Endothelial cell of umbilical vein (primary cell): ENCODE measurements at regions of chr9 and their contacts with region 1.

Region 1: GRCh38 chr9:136118320-136119060 is at the start of gene TMEM250:
- DNase-seq: peak; percentile 98
- H3K4me3 ChIP-seq: peak within 1 kb of the TSS; percentile 67 to 73 (median 70)
- H3K27ac ChIP-seq: peak within 1 kb of the TSS; percentile 41
- H3K4me1 ChIP-seq: peaks cover 12% of the 10 kb centered on the region
- H3K27me3 ChIP-seq: no peaks in the 10 kb centered on the region
- CTCF ChIP-seq: no peak
- POLR2A ChIP-seq: peak; percentile 4
- total RNA-seq, gene TMEM250: 47.4 and 49.9 TPM in 2 replicates

Region 2: DNA sequence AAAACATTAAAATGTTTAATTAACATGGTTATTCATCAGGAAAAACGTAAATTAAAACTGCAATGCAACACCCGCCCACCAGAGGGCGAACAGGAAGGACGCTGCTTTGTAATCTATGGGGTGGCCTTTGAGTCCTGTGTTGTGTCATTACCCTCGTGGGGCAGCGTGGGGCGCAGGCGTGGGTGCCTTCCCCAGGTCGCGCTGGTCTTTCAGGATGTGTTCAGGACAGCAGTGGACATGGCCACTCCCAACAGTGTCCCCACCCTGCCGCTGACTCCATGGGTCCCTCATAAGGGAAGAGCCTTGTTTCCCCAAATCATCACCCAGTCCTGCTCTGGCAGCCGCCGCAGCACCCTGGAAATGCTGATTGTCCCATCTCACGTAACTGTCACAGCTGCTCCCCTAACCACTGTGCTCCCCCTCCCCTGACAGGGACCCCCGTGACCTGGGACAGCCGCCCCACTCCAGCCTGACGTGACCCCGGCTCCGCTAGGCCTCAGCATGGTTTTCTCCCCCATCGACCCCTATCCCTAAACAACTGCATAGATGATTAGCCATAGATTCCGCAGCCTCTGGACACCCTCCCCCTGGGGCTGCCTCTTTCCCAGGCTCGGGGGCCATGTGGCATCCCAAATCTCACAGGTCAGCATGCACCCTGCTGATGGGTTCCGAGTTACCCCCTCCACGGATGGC is 515.6 kb before region 1 on chr9:
- CTCF ChIA-PET with region 1: no interaction called
- POLR2A ChIA-PET with region 1: no interaction called
- dilution Hi-C with region 1: no loop called
- intact Hi-C with region 1: loop called (anchors 1 kb)
- DNase-seq: peak; percentile 46
- H3K4me3 ChIP-seq: no peak overlapping the region
- H3K27ac ChIP-seq: no peak overlapping the region
- H3K4me1 ChIP-seq: no peaks in the 10 kb centered on the region
- H3K27me3 ChIP-seq: peaks cover 6% of the 10 kb centered on the region in 2 experiments
- CTCF ChIP-seq: peak; percentile 71 to 72
- POLR2A ChIP-seq: no peak

Region 3: GRCh38 chr9:135797507-135798262 is 320.8 kb before region 1 on chr9:
- CTCF ChIA-PET with region 1: interaction called, 26 read pairs
- POLR2A ChIA-PET with region 1: no interaction called
- dilution Hi-C with region 1: no loop called
- intact Hi-C with region 1: loop called (anchors 1 kb)
- DNase-seq: peak; percentile 29
- H3K4me3 ChIP-seq: no peak overlapping the region
- H3K27ac ChIP-seq: no peak overlapping the region
- H3K4me1 ChIP-seq: peaks cover 4% of the 10 kb centered on the region
- H3K27me3 ChIP-seq: no peaks in the 10 kb centered on the region
- CTCF ChIP-seq: peak; percentile 88 to 91
- POLR2A ChIP-seq: no peak

Region 4: GRCh38 chr9:135907431-135908092 is 210.9 kb before region 1 on chr9 and contains the start of gene CAMSAP1:
- CTCF ChIA-PET with region 1: interaction called, 4 read pairs
- POLR2A ChIA-PET with region 1: no interaction called
- dilution Hi-C with region 1: no loop called
- intact Hi-C with region 1: loop called (anchors 2 kb)
- DNase-seq: peak; percentile 95
- H3K4me3 ChIP-seq: peak within 1 kb of the TSS; percentile 42 to 84 (median 73)
- H3K27ac ChIP-seq: peak within 1 kb of the TSS; percentile 45
- H3K4me1 ChIP-seq: peaks cover 36% of the 10 kb centered on the region
- H3K27me3 ChIP-seq: no peaks in the 10 kb centered on the region
- CTCF ChIP-seq: no peak
- POLR2A ChIP-seq: peak; percentile 45
- total RNA-seq, gene CAMSAP1: 25.5 and 30.6 TPM in 2 replicates

Region 5: DNA sequence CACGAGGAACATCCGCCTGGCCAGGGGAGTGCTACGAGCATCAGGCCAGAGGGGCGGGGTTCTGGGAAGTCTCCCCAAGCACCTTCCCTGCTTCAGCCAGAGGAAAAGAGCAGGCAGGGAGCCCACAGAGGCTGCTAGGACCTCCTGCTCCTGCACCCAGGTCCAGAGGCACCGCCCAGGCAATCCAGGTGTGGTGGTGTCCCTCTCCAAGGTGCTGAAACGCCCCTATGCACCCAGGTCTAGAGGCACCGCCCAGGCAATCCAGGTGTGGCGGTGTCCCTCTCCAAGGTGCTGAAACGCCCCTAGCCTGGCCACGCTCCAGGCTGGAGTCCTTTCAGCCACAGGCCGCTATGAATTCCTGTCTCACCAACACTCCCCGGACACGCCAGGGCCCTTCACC is 146.6 kb before region 1 on chr9:
- CTCF ChIA-PET with region 1: interaction called, 211 read pairs
- POLR2A ChIA-PET with region 1: no interaction called
- dilution Hi-C with region 1: no loop called
- intact Hi-C with region 1: loop called (anchors 1 kb)
- DNase-seq: no peak
- H3K4me3 ChIP-seq: no peak overlapping the region
- H3K27ac ChIP-seq: no peak overlapping the region
- H3K4me1 ChIP-seq: peaks cover 22% of the 10 kb centered on the region
- H3K27me3 ChIP-seq: no peaks in the 10 kb centered on the region
- CTCF ChIP-seq: no peak
- POLR2A ChIP-seq: no peak

Region 6: GRCh38 chr9:136051517-136052432 is 66.7 kb before region 1 on chr9:
- CTCF ChIA-PET with region 1: interaction called, 18 read pairs
- POLR2A ChIA-PET with region 1: no interaction called
- dilution Hi-C with region 1: no loop called
- intact Hi-C with region 1: loop called (anchors 1 kb)
- DNase-seq: peak; percentile 96
- H3K4me3 ChIP-seq: peak overlapping the region; percentile 49 to 66 (median 53)
- H3K27ac ChIP-seq: peak overlapping the region; percentile 66
- H3K4me1 ChIP-seq: peaks cover 33% of the 10 kb centered on the region
- H3K27me3 ChIP-seq: no peaks in the 10 kb centered on the region
- CTCF ChIP-seq: no peak
- POLR2A ChIP-seq: peak; percentile 47

Region 7: GRCh38 chr9:136170006-136170901 is 51.8 kb after region 1 on chr9:
- CTCF ChIA-PET with region 1: no interaction called
- POLR2A ChIA-PET with region 1: no interaction called
- dilution Hi-C with region 1: no loop called
- intact Hi-C with region 1: no loop called
- DNase-seq: no peak
- H3K4me3 ChIP-seq: no peak overlapping the region
- H3K27ac ChIP-seq: no peak overlapping the region
- H3K4me1 ChIP-seq: no peaks in the 10 kb centered on the region
- H3K27me3 ChIP-seq: peaks cover 4% of the 10 kb centered on the region in 2 experiments
- CTCF ChIP-seq: peak; percentile 73 to 83
- POLR2A ChIP-seq: no peak

Region 8: GRCh38 chr9:136225748-136226679 is 107.5 kb after region 1 on chr9:
- CTCF ChIA-PET with region 1: no interaction called
- POLR2A ChIA-PET with region 1: no interaction called
- dilution Hi-C with region 1: no loop called
- intact Hi-C with region 1: no loop called
- DNase-seq: peak; percentile 42
- H3K4me3 ChIP-seq: no peak overlapping the region
- H3K27ac ChIP-seq: no peak overlapping the region
- H3K4me1 ChIP-seq: peaks cover 7% of the 10 kb centered on the region
- H3K27me3 ChIP-seq: no peaks in the 10 kb centered on the region
- CTCF ChIP-seq: peak; percentile 82 to 96
- POLR2A ChIP-seq: no peak

Region 9: DNA sequence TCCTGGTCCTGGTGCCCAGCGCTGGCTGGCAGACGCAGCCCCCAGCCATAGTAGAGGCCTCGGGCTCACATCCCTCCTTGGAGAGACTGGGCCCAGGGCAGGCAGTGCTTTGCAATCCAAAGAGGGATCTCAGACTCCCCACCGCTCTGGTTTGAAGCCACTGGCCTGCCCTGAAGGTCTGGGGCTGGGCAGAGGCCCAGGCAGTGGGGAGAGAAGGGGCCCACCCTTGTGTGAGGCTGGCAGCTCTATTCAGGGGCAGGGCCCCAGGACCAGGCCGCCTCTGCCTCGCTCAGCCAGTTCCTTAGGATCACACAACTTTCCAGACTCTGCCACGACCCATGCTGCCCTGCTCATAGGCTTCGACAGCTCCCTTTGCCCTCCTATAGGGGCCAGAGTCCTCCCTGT is 375.1 kb after region 1 on chr9:
- CTCF ChIA-PET with region 1: no interaction called
- POLR2A ChIA-PET with region 1: no interaction called
- dilution Hi-C with region 1: no loop called
- intact Hi-C with region 1: no loop called
- DNase-seq: no peak
- H3K4me3 ChIP-seq: no peak overlapping the region
- H3K27ac ChIP-seq: no peak overlapping the region
- H3K4me1 ChIP-seq: no peaks in the 10 kb centered on the region
- H3K27me3 ChIP-seq: no peaks in the 10 kb centered on the region
- CTCF ChIP-seq: no peak
- POLR2A ChIP-seq: no peak

Region 10: DNA sequence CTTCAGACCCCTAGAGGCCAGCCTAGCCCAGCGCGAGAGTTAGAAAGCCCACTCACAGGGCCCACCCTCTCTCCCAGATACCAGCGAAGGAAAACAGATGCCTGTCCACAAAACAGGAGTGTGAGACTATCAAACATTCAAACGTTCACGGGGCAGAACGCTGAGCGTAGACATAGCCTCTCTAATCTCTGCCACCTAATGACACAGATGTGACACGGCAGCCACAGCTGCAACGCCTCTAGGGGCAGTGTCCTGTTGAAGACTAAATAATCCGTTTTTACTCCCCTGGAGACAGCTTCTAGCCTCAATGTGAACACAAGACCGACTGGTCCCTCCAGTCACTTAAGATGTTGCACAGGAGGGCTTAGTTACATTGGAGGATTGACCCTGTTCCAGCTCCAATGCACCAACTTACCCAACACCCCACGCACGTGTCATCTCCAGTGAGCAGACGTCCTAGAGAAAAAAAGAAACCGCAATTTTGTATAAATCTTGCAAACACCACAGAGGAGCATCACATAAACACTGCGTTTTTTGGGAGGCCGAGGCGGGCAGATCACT is 608.2 kb after region 1 on chr9:
- CTCF ChIA-PET with region 1: no interaction called
- POLR2A ChIA-PET with region 1: no interaction called
- dilution Hi-C with region 1: no loop called
- intact Hi-C with region 1: no loop called
- DNase-seq: peak; percentile 56
- H3K4me3 ChIP-seq: peak overlapping the region; percentile 18 to 89 (median 70)
- H3K27ac ChIP-seq: peak overlapping the region; percentile 30
- H3K4me1 ChIP-seq: peaks cover 43% of the 10 kb centered on the region
- H3K27me3 ChIP-seq: no peaks in the 10 kb centered on the region
- CTCF ChIP-seq: peak; percentile 42 to 49
- POLR2A ChIP-seq: no peak